ENCODE measurements at regions of chrX and their contacts with region 1.

Region 1: DNA sequence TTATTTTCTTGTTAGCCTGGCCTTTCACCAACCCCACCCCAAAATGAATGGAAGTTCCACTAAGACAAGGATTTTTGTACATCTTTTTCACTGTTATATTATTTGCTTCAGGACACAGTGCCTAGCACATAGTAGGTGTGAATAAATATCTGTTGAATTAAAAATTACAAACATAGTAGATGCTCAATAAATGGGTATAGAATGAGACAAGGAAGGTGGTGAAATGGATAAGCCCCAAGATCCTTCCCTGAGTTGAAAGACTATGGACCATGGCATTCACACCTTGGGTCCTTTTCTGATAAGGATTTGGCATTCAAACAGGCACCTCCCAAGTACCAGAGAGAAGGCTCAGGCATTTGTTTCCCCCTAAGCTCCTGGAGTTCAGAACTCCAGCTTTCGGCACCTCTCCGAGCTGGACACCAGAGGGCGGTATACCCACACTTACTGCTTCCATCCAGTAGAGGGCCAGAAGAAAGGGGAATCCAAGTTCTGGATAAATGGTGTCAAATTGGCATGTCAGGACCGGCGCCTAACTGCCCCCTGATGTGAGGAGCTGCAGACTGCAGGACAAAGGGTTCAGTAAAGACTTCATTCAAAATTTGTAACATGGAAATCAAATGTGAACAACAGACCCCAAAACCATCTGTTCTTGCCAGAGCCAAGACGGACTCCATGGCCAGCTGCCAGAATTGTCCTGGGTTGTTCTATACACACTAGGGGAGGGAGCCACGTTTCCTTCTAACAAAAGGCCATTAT is 193.0 kb downstream of the GPC3 start:
- DNase-seq: peak; percentile 61
- H3K4me3 ChIP-seq: peak overlapping the region in 2 of 3 experiments; percentile 19 to 23
- H3K27ac ChIP-seq: no peak overlapping the region
- H3K4me1 ChIP-seq: no peaks in the 10 kb centered on the region
- H3K27me3 ChIP-seq: peaks cover 2% of the 10 kb centered on the region
- CTCF ChIP-seq: peak; percentile 100

Region 2: DNA sequence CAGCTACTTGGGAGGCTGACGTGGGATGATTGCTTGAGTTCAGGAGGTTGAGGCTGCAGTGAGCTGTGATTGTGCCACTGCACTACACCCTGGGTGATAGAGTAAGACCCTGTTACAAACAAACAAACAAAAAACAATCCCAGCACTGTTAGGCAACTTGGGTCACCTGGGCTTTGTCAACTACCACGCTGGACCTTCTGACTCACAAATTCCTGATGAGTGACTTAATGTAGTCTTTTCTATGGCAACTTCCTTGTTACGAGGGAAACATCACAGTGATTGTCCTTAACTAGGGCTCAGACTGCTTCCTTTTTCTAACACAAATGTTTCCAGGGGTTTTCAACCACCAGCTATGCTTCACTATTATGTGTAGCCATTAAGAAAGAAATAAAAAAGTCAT is 248.3 kb before region 1 on chrX:
- CTCF ChIA-PET with region 1: no interaction called
- dilution Hi-C with region 1: no loop called
- in situ Hi-C with region 1: no loop called
- intact Hi-C with region 1: no loop called
- DNase-seq: peak; percentile 78
- H3K4me3 ChIP-seq: no peak overlapping the region
- H3K27ac ChIP-seq: peak overlapping the region; percentile 68
- H3K4me1 ChIP-seq: no peaks in the 10 kb centered on the region
- H3K27me3 ChIP-seq: no peaks in the 10 kb centered on the region
- CTCF ChIP-seq: no peak

Region 3: DNA sequence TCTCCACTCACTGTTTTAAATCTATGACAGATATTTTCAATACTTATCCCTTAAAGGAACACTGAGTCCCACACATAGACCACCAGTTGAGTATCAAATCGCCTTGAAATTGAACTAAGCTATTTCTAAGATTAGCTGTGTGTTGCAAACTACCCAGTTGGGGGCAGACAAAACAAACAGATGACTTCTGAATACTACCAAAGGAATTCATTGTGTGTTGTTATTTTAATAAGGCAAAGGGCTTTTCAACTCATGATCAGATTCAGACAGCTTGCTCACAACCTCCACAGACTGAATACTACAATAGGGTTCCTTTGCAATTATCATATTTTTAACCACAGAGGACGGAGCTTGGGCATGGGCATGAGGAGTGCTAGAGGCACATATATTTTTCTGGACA is 94.1 kb before region 1 on chrX:
- CTCF ChIA-PET with region 1: interaction called, 13 read pairs
- dilution Hi-C with region 1: no loop called
- in situ Hi-C with region 1: no loop called
- intact Hi-C with region 1: no loop called
- DNase-seq: no peak
- H3K4me3 ChIP-seq: no peak overlapping the region
- H3K27ac ChIP-seq: no peak overlapping the region
- H3K4me1 ChIP-seq: no peaks in the 10 kb centered on the region
- H3K27me3 ChIP-seq: peaks cover 8% of the 10 kb centered on the region
- CTCF ChIP-seq: peak in 1 of 2 donors; percentile 29

Region 4: GRCh38 chrX:133921764-133922389 is 129.5 kb after region 1 on chrX:
- CTCF ChIA-PET with region 1: interaction called, 3 read pairs
- dilution Hi-C with region 1: no loop called
- in situ Hi-C with region 1: no loop called
- intact Hi-C with region 1: loop called (anchors 1 kb)
- DNase-seq: peak; percentile 28
- H3K4me3 ChIP-seq: no peak overlapping the region
- H3K27ac ChIP-seq: no peak overlapping the region
- H3K4me1 ChIP-seq: no peaks in the 10 kb centered on the region
- H3K27me3 ChIP-seq: no peaks in the 10 kb centered on the region
- CTCF ChIP-seq: peak; percentile 66 to 85

Region 5: GRCh38 chrX:134026565-134027311 is 234.4 kb after region 1 on chrX:
- CTCF ChIA-PET with region 1: no interaction called
- dilution Hi-C with region 1: no loop called
- in situ Hi-C with region 1: no loop called
- intact Hi-C with region 1: loop called (anchors 1 kb)
- DNase-seq: peak; percentile 50
- H3K4me3 ChIP-seq: no peak overlapping the region
- H3K27ac ChIP-seq: no peak overlapping the region
- H3K4me1 ChIP-seq: no peaks in the 10 kb centered on the region
- H3K27me3 ChIP-seq: no peaks in the 10 kb centered on the region
- CTCF ChIP-seq: peak; percentile 49 to 65

Region 6: GRCh38 chrX:134396174-134396573 is 603.8 kb after region 1 on chrX:
- CTCF ChIA-PET with region 1: interaction called, 6 read pairs
- dilution Hi-C with region 1: no loop called
- in situ Hi-C with region 1: no loop called
- intact Hi-C with region 1: loop called (anchors 1 kb)
- DNase-seq: peak; percentile 13
- H3K4me3 ChIP-seq: no peak overlapping the region
- H3K27ac ChIP-seq: no peak overlapping the region
- H3K4me1 ChIP-seq: no peaks in the 10 kb centered on the region
- H3K27me3 ChIP-seq: no peaks in the 10 kb centered on the region
- CTCF ChIP-seq: peak; percentile 72 to 80